Common myeloid progenitor, CD34-positive (primary cell): ENCODE measurements at regions of chr15 and their contacts with region 1.

Region 1: DNA sequence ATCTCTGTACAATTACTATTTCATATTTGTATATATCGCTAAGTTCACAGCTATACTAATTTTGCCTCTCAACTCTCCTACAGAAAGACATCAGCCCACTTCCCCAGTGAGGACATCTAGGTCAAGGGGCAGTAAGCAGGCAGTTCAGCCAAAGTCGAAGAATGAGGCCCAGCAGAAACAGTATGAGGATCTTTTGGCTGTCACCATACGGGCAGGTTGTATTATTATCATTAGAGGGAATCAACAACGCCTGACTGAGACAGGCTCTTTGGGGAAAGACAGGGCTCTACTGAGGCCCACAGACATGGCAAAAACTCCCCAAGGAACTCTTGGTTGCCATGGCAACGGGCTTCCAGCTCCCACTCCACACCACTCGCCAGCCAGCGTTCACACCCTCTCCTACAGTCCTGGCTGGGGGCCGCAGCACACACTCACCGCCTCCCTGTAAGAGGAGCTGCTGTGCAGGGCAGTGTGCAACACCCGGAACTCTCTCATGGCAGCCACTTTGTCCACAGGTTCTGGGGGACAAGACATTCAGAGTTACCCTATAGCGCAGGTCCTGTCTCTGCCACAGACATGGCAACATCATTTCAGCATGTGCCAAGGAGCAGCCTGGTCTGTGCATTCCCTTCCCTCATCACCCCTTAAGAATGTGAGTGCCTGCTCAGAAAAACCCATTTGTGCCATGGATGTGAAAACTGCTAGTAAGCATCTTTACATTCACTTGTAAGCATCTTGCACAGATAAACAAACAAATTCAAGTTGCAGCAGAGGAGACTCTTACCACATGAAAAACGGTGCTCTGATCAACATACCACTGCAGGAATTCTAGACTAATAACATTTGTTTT is 8.9 kb downstream of the UBL7 start:
- DNase-seq: no peak
- H3K4me3 ChIP-seq: no peak overlapping the region
- H3K27ac ChIP-seq: no peak overlapping the region
- H3K4me1 ChIP-seq: peaks cover 0 to 25% (median 4%) of the 10 kb centered on the region in 4 experiments
- H3K27me3 ChIP-seq: no peaks in the 10 kb centered on the region

Region 2: GRCh38 chr15:74438721-74439316 is 13.3 kb before region 1 on chr15:
- CTCF ChIA-PET with region 1: interaction called, 36 read pairs
- POLR2A ChIA-PET with region 1: interaction called, 3 read pairs
- DNase-seq: peak; percentile 80 to 89 (median 84)
- H3K4me3 ChIP-seq: no peak overlapping the region
- H3K27ac ChIP-seq: no peak overlapping the region
- H3K4me1 ChIP-seq: peaks cover 0 to 38% (median 24%) of the 10 kb centered on the region in 4 experiments
- H3K27me3 ChIP-seq: no peaks in the 10 kb centered on the region